ENCODE measurements at regions of chr11 and their contacts with region 1.

Region 1: DNA sequence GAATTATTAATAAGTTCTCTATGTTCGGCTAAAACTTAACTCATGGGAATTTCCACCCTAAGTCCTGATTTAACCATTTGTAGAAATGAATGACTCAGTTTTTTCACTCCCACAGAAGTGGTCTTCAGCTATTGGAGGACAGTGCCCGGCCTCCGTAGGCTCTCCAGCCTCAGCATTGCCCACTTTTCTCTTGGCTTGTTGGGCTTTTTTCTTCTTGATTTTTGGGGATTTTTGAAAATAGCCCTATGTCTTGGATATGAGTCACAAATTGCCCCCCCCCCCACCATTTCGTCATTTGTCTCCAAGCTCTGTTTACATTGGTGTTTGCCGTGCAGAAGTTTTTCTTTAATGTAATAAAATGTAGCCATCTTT is 66.7 kb downstream of the PACS1 start:
- DNase-seq: no peak
- H3K4me3 ChIP-seq: no peak overlapping the region
- H3K27ac ChIP-seq: peak overlapping the region; percentile 31
- H3K4me1 ChIP-seq: peaks cover 37% of the 10 kb centered on the region
- H3K27me3 ChIP-seq: no peaks in the 10 kb centered on the region
- CTCF ChIP-seq: no peak

Region 2: GRCh38 chr11:66069715-66070603 is 66.8 kb before region 1 on chr11 and contains the start of gene PACS1:
- CTCF ChIA-PET with region 1: interaction called, 4 read pairs
- POLR2A ChIA-PET with region 1: no interaction called
- intact Hi-C with region 1: loop called (anchors 2 kb)
- DNase-seq: peak; percentile 86
- H3K4me3 ChIP-seq: peak within 1 kb of the TSS; percentile 84
- H3K27ac ChIP-seq: peak within 1 kb of the TSS; percentile 87
- H3K4me1 ChIP-seq: peaks cover 34% of the 10 kb centered on the region
- H3K27me3 ChIP-seq: no peaks in the 10 kb centered on the region
- CTCF ChIP-seq: no peak
- total RNA-seq, gene PACS1: 75.7 and 79.1 TPM in 2 replicates

Measured in A673 (cell line).